ENCODE measurements at regions of chr19 and their contacts with region 1.

Region 1: DNA sequence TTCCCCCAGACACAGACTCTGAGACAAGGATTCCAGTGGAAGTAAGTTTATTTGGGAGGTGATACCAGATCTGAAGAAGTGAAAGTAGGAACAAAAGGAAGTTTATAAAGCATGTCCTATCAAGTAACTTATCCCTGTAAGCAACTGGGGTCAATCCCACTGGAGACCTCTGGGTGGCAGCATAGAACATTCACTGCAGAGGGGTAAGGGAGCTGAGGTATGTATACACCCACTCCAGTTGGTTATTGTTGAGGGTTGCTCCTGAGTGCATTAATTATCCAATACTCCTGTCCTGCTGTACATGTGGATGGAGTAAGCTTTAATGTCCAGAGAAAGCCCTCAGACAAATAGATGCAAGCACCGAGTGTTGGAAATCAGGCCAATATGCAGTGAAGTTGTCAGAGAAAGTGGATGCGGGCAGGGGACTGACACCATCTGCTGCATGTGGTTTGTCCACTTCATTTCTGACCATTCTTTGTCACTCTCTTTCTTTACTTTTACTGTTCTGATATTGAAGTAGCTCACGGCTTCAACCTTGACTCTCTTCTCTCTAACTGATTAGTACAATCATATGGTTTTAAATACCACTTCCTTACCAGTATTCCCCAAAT is 46.7 kb downstream of the NOTCH3 start:
- DNase-seq: peak in 1 of 2 donors; percentile 21
- ATAC-seq: peak; percentile 53

Region 2: DNA sequence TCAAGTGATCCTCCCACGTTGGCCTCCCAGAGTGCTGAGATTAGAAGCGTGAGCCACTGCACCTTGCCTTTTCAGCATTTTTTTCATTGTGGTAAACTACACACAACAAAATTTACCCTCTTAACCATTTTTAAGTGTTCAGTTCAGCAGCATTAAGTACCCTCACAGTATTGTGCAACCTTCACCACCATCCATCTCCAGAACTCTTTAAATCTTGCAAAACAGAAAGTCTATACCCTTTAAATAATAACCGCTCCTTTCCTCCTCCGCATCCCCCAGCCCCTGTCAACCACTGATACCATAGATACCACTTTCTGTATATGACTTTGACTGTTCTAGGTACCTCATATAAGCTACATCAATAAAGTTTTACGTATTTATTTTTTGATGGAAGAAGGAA is 125.6 kb before region 1 on chr19:
- intact Hi-C with region 1: no loop called
- DNase-seq: no peak
- ATAC-seq: no peak

Region 3: DNA sequence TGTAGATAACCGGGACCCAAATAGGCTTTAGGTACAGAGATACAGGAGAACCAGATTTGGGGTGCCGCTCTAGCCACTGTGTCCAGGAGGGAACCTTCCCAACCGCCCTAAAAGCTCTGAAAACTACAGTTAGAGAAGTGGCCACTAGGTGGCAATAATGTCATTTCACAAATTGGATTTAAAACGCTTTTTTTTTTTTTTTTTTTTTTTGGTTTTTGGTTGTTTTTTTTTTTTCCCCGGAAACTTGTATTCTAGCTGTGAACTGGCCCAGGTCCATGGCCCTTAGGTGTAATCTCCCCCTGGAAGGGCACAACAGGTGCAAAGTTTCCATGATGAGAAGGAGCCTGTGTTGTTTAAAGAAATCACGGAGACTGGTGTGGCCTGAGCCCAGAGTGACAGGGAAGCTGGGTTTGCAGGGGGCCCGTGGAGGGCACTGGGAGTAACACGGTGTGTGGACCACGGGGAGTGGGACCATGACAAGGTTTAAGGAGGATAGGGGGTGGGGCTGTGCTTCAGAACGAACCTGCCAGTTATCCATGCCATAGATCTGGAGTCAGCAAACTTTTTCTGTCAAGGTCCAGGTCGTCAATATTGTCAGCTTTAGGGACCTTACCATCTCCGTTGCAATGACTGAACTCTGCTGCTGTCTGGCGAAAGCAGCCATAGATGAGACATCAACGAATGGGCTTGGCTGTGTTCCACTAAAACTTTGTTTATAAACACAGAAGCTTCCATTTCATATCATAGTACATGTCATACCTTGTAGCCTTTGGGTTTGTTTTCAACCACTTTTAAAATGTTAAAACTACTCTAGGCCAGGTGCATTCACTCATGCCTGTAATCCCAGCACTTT is 62.0 kb before region 1 on chr19:
- intact Hi-C with region 1: loop called (anchors 2 to 10 kb)
- DNase-seq: no peak
- ATAC-seq: peak; percentile 40